Activated naive CD4-positive, alpha-beta T cell treated with anti-CD3 and anti-CD28 coated beads for 36 hours (primary cell): ENCODE measurements at regions of chr19 and their contacts with region 1.

Region 1: GRCh38 chr19:4471403-4472173 is 509 bp upstream of the HDGFL2 start:
- DNase-seq: peak; percentile 99
- H3K4me3 Mint-ChIP-seq: no peak overlapping the region
- H3K27ac Mint-ChIP-seq: no peak overlapping the region
- H3K4me1 Mint-ChIP-seq: peaks cover 21% of the 10 kb centered on the region
- H3K27me3 Mint-ChIP-seq: no peaks in the 10 kb centered on the region

Region 2: DNA sequence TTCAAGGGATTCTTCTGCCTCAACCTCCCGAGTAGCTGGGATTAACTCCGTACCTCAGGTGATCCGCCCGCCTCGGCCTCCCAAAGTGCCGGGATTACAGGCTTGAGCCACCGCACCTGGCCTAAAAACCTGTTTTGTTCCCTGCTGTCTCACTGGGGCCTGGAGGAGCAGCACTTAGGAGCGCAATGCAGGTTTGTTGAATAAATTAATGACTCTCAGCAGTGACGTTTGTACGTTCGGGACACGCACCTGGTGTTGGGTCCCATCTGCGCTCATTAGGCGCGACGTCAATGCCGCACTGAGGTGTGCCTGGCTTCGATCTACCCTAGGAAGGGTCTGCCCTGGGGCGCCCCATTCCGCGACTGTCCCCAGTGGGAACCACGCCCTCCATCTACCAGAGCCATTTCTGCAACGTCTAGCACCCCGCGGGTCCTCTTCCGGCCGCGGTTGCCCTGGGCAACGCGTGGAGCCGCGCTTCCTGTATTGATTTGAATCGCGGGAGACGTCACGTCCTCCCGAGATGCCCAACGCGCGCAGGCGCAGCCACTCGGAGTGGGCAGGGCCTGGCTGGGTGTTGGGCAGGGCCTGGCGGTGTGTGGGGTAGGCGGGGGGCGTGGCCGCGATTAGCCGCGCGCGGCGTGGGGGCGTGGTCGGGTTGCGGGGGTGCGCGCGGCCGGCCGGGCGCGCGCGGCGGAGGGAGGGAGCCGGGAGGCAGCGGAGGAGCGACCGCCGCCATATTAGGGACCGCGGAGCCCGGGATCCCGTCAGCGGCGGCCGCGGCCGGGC is 965.8 kb before region 1 on chr19 and contains the start of gene FZR1:
- CTCF ChIA-PET with region 1: no interaction called
- intact Hi-C with region 1: loop called (anchors 5 kb)
- DNase-seq: peak; percentile 99
- H3K4me3 Mint-ChIP-seq: peak within 1 kb of the TSS; percentile 90
- H3K27ac Mint-ChIP-seq: peak within 1 kb of the TSS; percentile 92
- H3K4me1 Mint-ChIP-seq: peaks cover 39% of the 10 kb centered on the region
- H3K27me3 Mint-ChIP-seq: no peaks in the 10 kb centered on the region
- total RNA-seq, gene FZR1: 40.3 to 46.3 TPM

Region 3: GRCh38 chr19:4246767-4247593 is 224.6 kb before region 1 on chr19 and contains the start of gene YJU2:
- CTCF ChIA-PET with region 1: no interaction called
- intact Hi-C with region 1: loop called (anchors 1 kb)
- DNase-seq: peak; percentile 100
- H3K4me3 Mint-ChIP-seq: peak within 1 kb of the TSS; percentile 80
- H3K27ac Mint-ChIP-seq: peak within 1 kb of the TSS; percentile 95
- H3K4me1 Mint-ChIP-seq: peaks cover 22% of the 10 kb centered on the region
- H3K27me3 Mint-ChIP-seq: no peaks in the 10 kb centered on the region
- total RNA-seq, gene YJU2: 28.5 to 29.8 TPM

Region 4: DNA sequence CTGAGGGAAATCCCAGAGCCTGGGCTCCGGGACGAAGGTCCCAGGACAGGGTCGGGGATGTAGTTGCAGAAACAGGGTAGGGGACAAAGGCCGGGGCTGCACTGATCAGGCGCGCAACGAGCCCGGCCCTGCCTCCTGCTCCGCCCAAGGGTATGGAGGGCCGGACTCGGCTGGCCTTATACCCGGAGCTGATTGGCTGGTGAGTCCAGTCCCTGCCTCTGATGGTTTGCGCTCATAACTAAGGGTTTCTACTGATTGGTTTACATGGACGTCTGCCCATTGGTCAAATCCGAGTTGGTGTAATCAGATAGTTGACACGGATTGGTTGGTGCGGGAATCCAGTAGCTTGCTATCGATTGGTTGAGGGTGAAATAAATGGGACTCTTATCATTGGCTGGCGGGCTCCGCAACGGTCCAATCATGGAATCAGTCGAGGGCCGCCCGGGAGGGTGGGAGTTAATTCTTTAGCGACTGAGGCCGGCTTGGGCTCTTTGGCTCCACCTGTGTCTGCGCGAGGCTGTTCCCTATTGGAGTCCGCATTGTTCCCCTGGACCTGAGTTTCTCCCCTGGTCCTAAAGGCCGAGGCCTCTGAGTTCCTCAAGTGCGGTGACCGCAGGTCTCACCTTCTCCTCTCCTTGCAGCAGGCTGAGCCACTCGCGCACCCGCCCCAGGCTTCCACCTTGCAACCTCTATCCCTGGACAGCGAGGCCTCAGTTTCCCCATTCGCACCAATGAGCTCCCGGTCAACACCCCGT is 128.8 kb before region 1 on chr19:
- CTCF ChIA-PET with region 1: no interaction called
- intact Hi-C with region 1: loop called (anchors 5 kb)
- DNase-seq: peak; percentile 97
- H3K4me3 Mint-ChIP-seq: peak overlapping the region; percentile 94
- H3K27ac Mint-ChIP-seq: peak overlapping the region; percentile 94
- H3K4me1 Mint-ChIP-seq: peaks cover 27% of the 10 kb centered on the region
- H3K27me3 Mint-ChIP-seq: no peaks in the 10 kb centered on the region

Region 5: GRCh38 chr19:4457654-4458395 is 13.8 kb before region 1 on chr19 and contains the start of gene UBXN6:
- CTCF ChIA-PET with region 1: no interaction called
- intact Hi-C with region 1: loop called (anchors 1 kb)
- DNase-seq: peak; percentile 99
- H3K4me3 Mint-ChIP-seq: peak within 1 kb of the TSS; percentile 86
- H3K27ac Mint-ChIP-seq: peak within 1 kb of the TSS; percentile 85
- H3K4me1 Mint-ChIP-seq: peaks cover 12% of the 10 kb centered on the region
- H3K27me3 Mint-ChIP-seq: no peaks in the 10 kb centered on the region
- total RNA-seq, gene UBXN6: 28.7 to 36.2 TPM

Region 6: DNA sequence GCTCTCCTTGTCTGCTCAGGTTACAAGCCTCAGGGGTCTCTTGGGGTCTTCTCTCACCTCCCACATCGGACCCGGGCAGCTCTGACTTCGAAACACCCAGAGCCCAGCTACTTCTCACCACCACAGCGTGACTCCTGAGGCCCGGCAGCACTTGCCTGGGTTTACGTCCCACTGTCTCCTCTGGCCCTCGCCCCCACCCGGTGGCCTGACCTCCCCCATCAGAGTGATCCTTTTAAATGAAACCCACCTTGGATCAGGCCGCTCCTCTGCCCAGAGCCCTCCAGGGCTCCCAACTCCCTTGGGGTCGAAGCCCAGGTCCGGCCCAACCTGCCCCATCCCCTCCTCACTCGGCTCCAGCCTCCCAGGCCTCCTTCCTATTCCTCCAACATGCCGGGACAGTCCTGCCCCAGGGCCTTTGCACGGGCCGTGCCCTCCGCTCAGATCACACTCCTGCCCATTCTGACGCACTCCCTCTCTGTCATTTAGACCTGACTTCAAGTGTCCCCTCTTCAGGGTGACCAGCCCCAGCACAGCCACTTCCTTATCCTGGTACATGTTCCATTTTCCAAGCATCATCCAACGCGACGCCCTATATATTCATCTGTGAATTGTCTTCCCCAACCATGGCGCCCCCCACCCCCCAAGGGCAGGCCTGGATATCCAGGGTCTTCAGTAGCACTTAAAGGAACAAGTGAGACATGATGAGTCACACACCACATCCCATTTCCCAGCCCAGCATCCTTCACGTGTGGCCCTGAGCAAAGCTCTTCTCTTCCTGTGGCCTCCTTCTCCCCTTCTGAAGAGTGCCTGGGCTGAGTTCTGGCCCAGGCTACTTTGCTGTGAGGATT is 34.5 kb after region 1 on chr19:
- CTCF ChIA-PET with region 1: no interaction called
- intact Hi-C with region 1: no loop called
- DNase-seq: peak; percentile 24
- H3K4me3 Mint-ChIP-seq: no peak overlapping the region
- H3K27ac Mint-ChIP-seq: no peak overlapping the region
- H3K4me1 Mint-ChIP-seq: peaks cover 6% of the 10 kb centered on the region
- H3K27me3 Mint-ChIP-seq: no peaks in the 10 kb centered on the region

Region 7: GRCh38 chr19:4589579-4590410 is 118.2 kb after region 1 on chr19:
- CTCF ChIA-PET with region 1: no interaction called
- intact Hi-C with region 1: no loop called
- DNase-seq: peak; percentile 35
- H3K4me3 Mint-ChIP-seq: no peak overlapping the region
- H3K27ac Mint-ChIP-seq: no peak overlapping the region
- H3K4me1 Mint-ChIP-seq: no peaks in the 10 kb centered on the region
- H3K27me3 Mint-ChIP-seq: peaks cover 49% of the 10 kb centered on the region

Region 8: DNA sequence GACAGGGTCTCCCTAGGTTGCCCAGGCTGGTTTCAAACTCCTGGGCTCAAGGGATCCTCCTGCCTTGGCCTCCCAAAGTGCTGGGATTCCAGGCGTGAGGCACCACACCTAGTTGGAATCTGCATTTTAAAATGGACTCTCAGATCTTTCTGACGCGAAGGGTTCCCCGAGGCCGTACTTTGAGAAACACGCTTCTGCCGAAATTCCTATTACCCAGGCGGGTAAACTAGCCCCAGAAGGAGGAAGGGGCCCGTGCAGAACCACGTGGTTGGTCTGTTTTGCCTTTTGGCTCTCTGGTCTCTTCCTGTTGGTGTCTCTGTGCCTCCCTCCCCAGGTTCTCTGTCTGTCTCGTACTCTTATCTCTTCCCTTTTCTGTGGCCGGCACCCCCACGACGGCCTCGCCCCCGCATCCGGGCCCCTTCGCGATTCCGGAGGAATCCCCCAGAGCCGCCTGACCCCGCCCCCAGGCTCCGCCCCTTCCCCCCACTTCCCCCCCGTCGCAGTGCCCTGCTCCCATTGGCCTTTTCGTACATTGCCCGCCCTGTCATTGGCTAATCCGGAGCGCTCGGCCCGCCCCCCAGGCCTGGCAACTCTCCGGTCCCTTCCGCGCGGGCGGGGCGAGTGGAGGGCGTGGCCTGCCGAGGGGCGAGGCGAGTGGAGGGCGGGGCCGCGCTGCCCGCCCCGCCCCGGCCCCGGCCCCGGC is 167.4 kb after region 1 on chr19 and contains the start of gene TNFAIP8L1:
- CTCF ChIA-PET with region 1: interaction called, 3 read pairs
- intact Hi-C with region 1: loop called (anchors 1 kb)
- DNase-seq: peak; percentile 99
- H3K4me3 Mint-ChIP-seq: peak within 1 kb of the TSS; percentile 80
- H3K27ac Mint-ChIP-seq: peak within 1 kb of the TSS; percentile 91
- H3K4me1 Mint-ChIP-seq: peaks cover 35% of the 10 kb centered on the region
- H3K27me3 Mint-ChIP-seq: no peaks in the 10 kb centered on the region
- total RNA-seq, gene TNFAIP8L1: 19.9 to 20.4 TPM

Region 9: DNA sequence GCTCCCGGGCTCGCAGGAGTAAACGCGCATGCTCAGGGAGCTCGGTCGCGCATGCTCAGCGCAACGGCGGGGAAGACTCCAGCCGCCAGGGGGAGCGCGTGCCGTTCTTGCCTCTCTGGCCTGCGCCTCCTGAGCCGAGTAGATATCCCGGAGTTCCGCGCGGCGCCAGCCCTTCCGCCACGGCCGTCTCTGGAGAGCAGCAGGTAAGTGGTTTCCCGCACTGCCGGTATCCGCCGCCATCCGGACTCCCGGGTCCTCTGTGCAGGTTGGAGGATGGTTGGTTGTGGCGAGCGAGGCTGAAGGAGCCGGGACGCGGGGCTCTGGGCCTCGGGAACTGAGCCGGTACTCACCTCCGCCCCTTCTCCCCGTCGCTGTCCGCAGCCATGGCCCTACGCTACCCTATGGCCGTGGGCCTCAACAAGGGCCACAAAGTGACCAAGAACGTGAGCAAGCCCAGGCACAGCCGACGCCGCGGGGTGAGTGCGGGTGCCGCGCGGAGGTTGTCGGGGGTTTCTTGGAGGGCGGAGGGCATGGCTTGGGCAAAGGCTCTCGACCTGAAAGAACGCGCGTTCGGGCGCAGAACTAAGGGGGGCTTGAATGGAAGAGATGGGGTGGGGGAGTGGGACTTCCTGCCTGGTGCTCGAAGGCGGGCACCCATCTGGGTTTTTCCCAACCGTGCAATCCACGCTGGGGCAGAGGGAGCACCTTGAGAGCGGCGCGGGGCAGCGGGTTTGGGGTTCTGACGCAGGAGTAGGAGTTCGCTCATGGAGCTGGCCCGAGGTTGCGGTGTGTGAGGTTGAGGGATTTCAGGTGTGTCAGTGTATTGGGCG is 1218.8 kb after region 1 on chr19 and contains the start of gene RPL36:
- CTCF ChIA-PET with region 1: no interaction called
- intact Hi-C with region 1: loop called (anchors 5 kb)
- DNase-seq: peak; percentile 100
- H3K4me3 Mint-ChIP-seq: peak within 1 kb of the TSS; percentile 98
- H3K27ac Mint-ChIP-seq: peak within 1 kb of the TSS; percentile 96
- H3K4me1 Mint-ChIP-seq: peaks cover 22% of the 10 kb centered on the region
- H3K27me3 Mint-ChIP-seq: no peaks in the 10 kb centered on the region
- total RNA-seq, gene RPL36: 1,916 to 2,003 TPM